ENCODE measurements at regions of chr3 and their contacts with region 1.

Region 1: DNA sequence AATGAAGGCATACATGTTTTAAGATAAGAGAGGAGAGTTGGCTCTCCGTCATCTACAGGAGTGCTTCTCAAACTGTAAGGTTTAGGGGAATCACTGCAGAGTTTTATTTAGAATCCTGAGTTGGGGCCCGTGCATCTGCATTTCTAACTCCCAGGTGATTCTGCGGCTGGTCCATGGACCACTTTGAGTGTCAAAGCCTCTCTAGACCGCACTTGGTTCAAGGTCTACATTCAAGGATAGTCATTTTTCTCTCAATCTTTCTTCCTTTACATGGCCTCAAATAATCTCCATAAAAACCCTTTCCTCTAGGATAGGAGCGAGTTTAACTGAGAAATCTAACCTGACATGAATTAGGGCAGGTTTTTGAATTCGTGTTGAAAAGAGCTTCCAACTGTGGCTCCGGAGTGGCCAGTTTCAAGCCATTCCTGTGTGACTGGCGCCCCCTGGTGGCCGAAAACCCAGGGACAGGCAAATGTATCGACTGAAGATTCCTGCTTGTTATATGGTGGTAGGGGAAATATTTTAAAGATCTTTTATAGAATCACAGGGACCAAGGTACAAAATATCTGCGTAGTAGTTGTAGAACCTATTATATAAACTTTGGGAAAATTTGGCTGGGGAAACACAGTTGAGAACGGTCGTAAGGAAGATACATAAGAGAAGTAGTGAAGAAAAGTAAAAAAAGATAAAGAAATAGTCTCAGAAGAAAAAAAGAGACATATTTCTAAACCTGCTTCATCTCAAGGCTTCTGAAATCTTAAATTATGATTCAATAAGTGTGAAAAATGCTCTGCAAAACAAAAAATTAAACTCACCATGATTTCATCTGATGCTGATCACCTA is 11.9 kb downstream of the GABRR3 start:
- DNase-seq: peak; percentile 93
- H3K4me3 Mint-ChIP-seq: no peak overlapping the region
- H3K27ac Mint-ChIP-seq: no peak overlapping the region
- H3K4me1 Mint-ChIP-seq: peaks cover 5% of the 10 kb centered on the region
- H3K27me3 Mint-ChIP-seq: no peaks in the 10 kb centered on the region

Region 2: GRCh38 chr3:96863129-96863740 is 1160.0 kb before region 1 on chr3:
- CTCF ChIA-PET with region 1: no interaction called
- POLR2A ChIA-PET with region 1: no interaction called
- intact Hi-C with region 1: loop called (anchors 5 kb)
- DNase-seq: peak; percentile 18
- H3K4me3 Mint-ChIP-seq: no peak overlapping the region
- H3K27ac Mint-ChIP-seq: no peak overlapping the region
- H3K4me1 Mint-ChIP-seq: no peaks in the 10 kb centered on the region
- H3K27me3 Mint-ChIP-seq: no peaks in the 10 kb centered on the region

Region 3: GRCh38 chr3:97070298-97070697 is 952.9 kb before region 1 on chr3:
- CTCF ChIA-PET with region 1: no interaction called
- POLR2A ChIA-PET with region 1: no interaction called
- intact Hi-C with region 1: no loop called
- DNase-seq: no peak
- H3K4me3 Mint-ChIP-seq: no peak overlapping the region
- H3K27ac Mint-ChIP-seq: no peak overlapping the region
- H3K4me1 Mint-ChIP-seq: no peaks in the 10 kb centered on the region
- H3K27me3 Mint-ChIP-seq: no peaks in the 10 kb centered on the region

Region 4: DNA sequence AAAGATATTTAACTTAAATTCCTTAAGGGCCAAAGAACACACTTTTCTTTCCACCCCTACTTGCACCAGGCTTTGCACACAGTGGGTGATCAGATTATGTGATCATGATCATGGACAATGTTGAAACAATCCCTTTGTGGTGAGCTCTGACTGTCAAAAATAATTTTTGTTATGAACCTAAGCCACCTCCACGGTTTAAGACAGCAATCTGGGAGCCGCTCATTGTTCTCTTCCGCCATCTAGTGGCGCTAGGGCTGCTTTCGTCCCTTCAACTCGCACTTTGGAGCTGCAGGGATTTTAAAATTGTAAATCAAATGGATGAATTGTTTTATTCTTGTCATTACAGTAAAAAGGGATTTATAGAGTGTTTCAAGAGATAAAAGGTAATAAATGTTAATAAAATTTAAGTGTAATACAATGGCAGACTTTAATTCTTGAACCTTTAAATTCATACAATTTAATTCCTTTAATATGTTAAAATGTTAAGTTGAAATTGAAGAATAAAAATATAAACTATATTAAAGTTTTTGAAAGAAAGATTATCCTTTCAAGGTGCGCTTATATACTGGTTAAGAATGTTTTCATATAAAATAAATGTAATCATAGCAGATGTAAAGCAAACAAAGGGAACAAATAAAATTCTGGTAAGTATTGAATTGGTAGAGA is 303.9 kb before region 1 on chr3:
- CTCF ChIA-PET with region 1: interaction called, 5 read pairs
- POLR2A ChIA-PET with region 1: no interaction called
- intact Hi-C with region 1: loop called (anchors 1 kb)
- DNase-seq: peak; percentile 74
- H3K4me3 Mint-ChIP-seq: no peak overlapping the region
- H3K27ac Mint-ChIP-seq: no peak overlapping the region
- H3K4me1 Mint-ChIP-seq: no peaks in the 10 kb centered on the region
- H3K27me3 Mint-ChIP-seq: no peaks in the 10 kb centered on the region

Region 5: GRCh38 chr3:97793420-97794019 is 229.7 kb before region 1 on chr3:
- CTCF ChIA-PET with region 1: interaction called, 90 read pairs
- POLR2A ChIA-PET with region 1: no interaction called
- intact Hi-C with region 1: loop called (anchors 1 kb)
- DNase-seq: no peak
- H3K4me3 Mint-ChIP-seq: no peak overlapping the region
- H3K27ac Mint-ChIP-seq: no peak overlapping the region
- H3K4me1 Mint-ChIP-seq: no peaks in the 10 kb centered on the region
- H3K27me3 Mint-ChIP-seq: no peaks in the 10 kb centered on the region

Region 6: DNA sequence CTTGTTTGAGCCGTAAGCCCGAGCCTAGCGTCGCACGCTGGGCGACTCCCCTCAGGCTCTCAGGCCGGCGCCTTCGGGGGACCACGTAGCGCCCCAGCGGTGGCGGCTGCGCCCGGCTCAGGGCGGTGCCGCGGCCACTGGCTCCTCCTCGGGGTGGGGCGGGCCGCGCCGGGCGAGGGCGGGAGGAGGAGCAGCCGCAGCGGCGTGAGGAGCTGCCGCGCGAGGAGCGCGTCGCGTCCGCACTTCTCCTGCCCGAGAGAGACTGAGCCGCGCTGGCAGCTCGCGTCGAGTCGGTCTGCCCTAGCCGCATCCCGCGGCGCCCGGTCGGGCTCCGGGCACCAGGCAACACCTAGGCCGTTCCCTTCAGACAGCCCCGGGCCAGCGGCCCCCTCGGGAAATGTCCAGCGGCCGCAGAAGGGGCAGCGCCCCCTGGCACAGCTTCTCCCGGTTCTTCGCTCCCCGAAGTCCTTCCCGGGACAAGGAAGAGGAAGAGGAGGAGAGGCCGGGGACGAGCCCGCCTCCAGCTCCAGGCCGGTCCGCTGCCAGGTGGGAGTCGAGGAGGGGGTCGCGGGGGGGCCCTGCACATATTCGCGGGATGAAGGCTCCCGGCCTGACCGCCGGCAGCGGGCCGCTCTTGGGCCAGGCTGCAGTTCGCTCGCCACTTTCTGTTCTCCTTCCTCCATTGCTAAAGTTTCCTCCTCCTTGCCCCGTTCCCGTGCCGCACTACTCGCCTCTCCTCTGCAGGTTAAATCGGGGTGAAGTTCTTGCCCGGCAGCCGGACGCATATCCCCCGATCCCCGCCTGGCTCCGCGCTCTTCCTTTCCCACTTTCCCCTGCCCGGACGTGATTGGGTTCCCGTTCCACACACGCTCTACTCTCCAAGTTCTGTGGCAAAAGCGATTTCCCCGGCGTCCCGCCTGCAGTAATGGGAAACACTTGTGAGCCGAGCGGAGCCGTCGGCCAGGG is 201.1 kb before region 1 on chr3 and contains the start of gene CRYBG3:
- CTCF ChIA-PET with region 1: interaction called, 23 read pairs
- POLR2A ChIA-PET with region 1: interaction called, 3 read pairs
- intact Hi-C with region 1: no loop called
- DNase-seq: peak; percentile 88
- H3K4me3 Mint-ChIP-seq: peak within 1 kb of the TSS; percentile 89
- H3K27ac Mint-ChIP-seq: peak within 1 kb of the TSS; percentile 36
- H3K4me1 Mint-ChIP-seq: peaks cover 15% of the 10 kb centered on the region
- H3K27me3 Mint-ChIP-seq: peaks cover 9% of the 10 kb centered on the region
- total RNA-seq, gene CRYBG3: 6.4 to 6.9 TPM

Region 7: DNA sequence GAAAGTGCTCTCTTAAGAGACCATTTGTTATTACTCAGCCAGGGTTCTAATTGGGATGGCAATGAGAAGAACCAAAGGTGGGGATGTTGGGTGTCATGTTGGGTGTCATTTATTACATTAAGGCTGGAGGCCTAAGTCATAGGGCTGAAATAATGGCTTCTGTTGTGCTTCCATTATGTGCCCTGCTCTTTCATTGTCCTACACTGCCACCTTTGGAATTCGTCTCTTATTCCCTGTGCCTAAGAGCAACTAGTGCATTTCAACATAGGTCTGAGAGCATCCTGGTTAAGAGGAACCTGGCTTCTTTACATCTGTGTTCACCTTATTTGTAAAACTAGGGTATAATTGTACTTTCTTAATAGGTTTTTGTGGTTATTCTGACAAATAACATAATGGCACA is 83.2 kb before region 1 on chr3:
- CTCF ChIA-PET with region 1: interaction called, 18 read pairs
- POLR2A ChIA-PET with region 1: no interaction called
- intact Hi-C with region 1: loop called (anchors 5 kb)
- DNase-seq: no peak
- H3K4me3 Mint-ChIP-seq: no peak overlapping the region
- H3K27ac Mint-ChIP-seq: no peak overlapping the region
- H3K4me1 Mint-ChIP-seq: peaks cover 21% of the 10 kb centered on the region
- H3K27me3 Mint-ChIP-seq: no peaks in the 10 kb centered on the region

Region 8: GRCh38 chr3:99526921-99527320 is 1503.7 kb after region 1 on chr3:
- CTCF ChIA-PET with region 1: no interaction called
- POLR2A ChIA-PET with region 1: no interaction called
- intact Hi-C with region 1: no loop called
- DNase-seq: no peak
- H3K4me3 Mint-ChIP-seq: no peak overlapping the region
- H3K27ac Mint-ChIP-seq: no peak overlapping the region
- H3K4me1 Mint-ChIP-seq: no peaks in the 10 kb centered on the region
- H3K27me3 Mint-ChIP-seq: peaks cover 2% of the 10 kb centered on the region

Measured in activated CD4-positive, alpha-beta memory T cell treated with anti-CD3 and anti-CD28 coated beads for 36 hours (primary cell).